ENCODE measurements at regions of chr3 and their contacts with region 1.

Region 1: GRCh38 chr3:115436767-115437301 is 186.5 kb upstream of the GAP43 start:
- DNase-seq: peak; percentile 95
- H3K4me3 Mint-ChIP-seq: no peak overlapping the region
- H3K27ac Mint-ChIP-seq: no peak overlapping the region
- H3K4me1 Mint-ChIP-seq: peaks cover 13% of the 10 kb centered on the region
- H3K27me3 Mint-ChIP-seq: no peaks in the 10 kb centered on the region
- CTCF ChIP-seq: peak; percentile 45

Region 2: GRCh38 chr3:114827495-114827894 is 609.3 kb before region 1 on chr3:
- CTCF ChIA-PET with region 1: interaction called, 3 read pairs
- POLR2A ChIA-PET with region 1: no interaction called
- intact Hi-C with region 1: loop called (anchors 10 kb)
- DNase-seq: peak; percentile 50
- H3K4me3 Mint-ChIP-seq: no peak overlapping the region
- H3K27ac Mint-ChIP-seq: no peak overlapping the region
- H3K4me1 Mint-ChIP-seq: no peaks in the 10 kb centered on the region
- H3K27me3 Mint-ChIP-seq: no peaks in the 10 kb centered on the region
- CTCF ChIP-seq: peak; percentile 64

Region 3: DNA sequence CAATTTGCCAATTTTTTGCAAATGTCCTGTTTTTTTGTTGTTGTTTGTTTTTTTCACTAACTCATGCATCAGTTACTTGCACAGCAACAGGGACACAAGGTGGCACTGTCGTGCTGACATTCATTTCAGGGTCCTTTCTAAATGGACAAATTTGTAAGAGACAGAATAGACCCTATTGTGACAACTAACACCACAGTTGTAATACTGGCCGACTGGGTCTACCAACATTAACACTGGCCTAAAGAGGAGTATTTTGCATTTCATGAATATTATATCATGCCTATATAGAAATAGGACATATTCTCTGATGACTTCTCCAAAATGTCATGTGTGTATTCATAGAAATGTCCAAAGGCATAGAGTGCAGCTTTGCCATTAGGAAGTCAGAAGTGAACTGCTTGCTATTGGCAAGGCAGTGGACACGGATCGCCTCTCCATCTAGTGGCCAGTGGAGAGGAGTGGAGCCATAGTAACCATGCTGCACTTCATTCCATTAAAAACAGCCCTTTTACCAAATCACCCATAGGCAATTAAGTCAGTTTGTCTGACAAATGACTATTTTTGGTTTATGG is 344.5 kb before region 1 on chr3:
- CTCF ChIA-PET with region 1: interaction called, 4 read pairs
- POLR2A ChIA-PET with region 1: no interaction called
- intact Hi-C with region 1: loop called (anchors 1 kb)
- DNase-seq: peak; percentile 50
- H3K4me3 Mint-ChIP-seq: no peak overlapping the region
- H3K27ac Mint-ChIP-seq: no peak overlapping the region
- H3K4me1 Mint-ChIP-seq: peaks cover 1% of the 10 kb centered on the region
- H3K27me3 Mint-ChIP-seq: no peaks in the 10 kb centered on the region
- CTCF ChIP-seq: peak; percentile 44

Region 4: GRCh38 chr3:115217678-115218451 is 219.0 kb before region 1 on chr3:
- CTCF ChIA-PET with region 1: interaction called, 13 read pairs
- POLR2A ChIA-PET with region 1: interaction called, 4 read pairs
- intact Hi-C with region 1: loop called (anchors 1 kb)
- DNase-seq: peak; percentile 71
- H3K4me3 Mint-ChIP-seq: no peak overlapping the region
- H3K27ac Mint-ChIP-seq: peak overlapping the region; percentile 9
- H3K4me1 Mint-ChIP-seq: peaks cover 8% of the 10 kb centered on the region
- H3K27me3 Mint-ChIP-seq: no peaks in the 10 kb centered on the region
- CTCF ChIP-seq: peak; percentile 81

Region 5: DNA sequence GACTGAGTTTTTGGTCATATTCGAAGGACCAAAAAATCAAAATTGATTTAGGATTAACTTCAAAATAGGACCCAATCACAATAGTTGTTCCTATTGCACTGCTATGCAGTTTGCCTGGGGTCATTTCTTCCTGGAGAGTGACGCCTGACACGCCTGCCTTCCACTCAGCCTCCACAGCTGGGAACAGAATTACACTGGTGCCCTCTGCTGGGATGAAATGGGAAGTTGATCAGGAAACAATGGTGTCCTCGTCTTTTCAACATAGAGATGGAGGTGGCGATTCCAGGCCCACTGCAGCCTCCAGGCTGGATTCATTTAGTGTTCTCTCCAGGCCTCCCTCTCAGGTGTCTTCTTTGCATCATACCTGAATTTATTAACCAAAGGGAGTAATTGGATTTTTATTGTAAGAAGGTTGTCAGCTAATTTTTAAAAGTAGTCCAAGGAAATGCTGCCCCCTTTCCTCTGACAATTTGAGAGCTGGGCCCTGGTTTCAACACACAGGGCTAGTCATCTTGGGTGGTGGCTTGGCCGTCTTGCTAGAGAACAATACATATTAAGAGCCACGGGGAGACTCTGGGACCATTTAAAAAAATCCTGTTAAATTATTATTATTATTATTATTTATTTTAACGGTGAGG is 256.2 kb after region 1 on chr3:
- CTCF ChIA-PET with region 1: interaction called, 3 read pairs
- POLR2A ChIA-PET with region 1: no interaction called
- intact Hi-C with region 1: loop called (anchors 1 kb)
- DNase-seq: peak; percentile 88
- H3K4me3 Mint-ChIP-seq: no peak overlapping the region
- H3K27ac Mint-ChIP-seq: no peak overlapping the region
- H3K4me1 Mint-ChIP-seq: peaks cover 21% of the 10 kb centered on the region
- H3K27me3 Mint-ChIP-seq: no peaks in the 10 kb centered on the region
- CTCF ChIP-seq: peak; percentile 83

Region 6: DNA sequence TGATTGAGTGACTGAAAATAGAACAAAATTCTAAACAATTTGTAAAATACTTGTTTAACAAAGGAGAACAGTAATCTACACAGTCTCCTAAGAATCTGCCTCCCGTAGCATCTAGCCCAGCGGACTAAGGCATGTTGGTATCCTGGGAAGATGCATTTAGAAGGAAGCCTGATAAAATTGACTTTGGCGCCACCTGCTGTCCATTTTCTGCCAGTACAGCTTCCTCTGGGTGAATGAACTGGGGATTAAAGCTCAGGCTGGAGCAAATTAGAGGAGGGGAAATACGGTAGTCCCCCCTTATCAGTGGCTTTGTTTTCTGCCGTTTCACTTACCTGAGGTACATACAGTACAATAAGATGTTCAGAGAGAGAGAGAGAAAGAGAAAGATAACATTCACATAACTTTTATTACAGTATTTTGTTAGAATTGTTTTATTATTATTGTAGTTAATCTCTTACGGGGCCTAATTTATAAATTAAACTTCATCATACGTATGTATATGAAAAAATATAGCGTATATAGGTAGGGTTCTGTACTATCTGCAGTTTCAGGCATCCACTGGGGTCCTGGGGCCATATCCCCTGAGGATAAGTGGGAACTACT is 378.0 kb after region 1 on chr3:
- CTCF ChIA-PET with region 1: interaction called, 4 read pairs
- POLR2A ChIA-PET with region 1: no interaction called
- intact Hi-C with region 1: loop called (anchors 1 kb)
- DNase-seq: peak; percentile 85
- H3K4me3 Mint-ChIP-seq: no peak overlapping the region
- H3K27ac Mint-ChIP-seq: no peak overlapping the region
- H3K4me1 Mint-ChIP-seq: no peaks in the 10 kb centered on the region
- H3K27me3 Mint-ChIP-seq: no peaks in the 10 kb centered on the region
- CTCF ChIP-seq: peak; percentile 81